Dorsolateral prefrontal cortex (tissue), 120 donors: ENCODE measurements at regions of chr7 and their contacts with region 1.

Region 1: DNA sequence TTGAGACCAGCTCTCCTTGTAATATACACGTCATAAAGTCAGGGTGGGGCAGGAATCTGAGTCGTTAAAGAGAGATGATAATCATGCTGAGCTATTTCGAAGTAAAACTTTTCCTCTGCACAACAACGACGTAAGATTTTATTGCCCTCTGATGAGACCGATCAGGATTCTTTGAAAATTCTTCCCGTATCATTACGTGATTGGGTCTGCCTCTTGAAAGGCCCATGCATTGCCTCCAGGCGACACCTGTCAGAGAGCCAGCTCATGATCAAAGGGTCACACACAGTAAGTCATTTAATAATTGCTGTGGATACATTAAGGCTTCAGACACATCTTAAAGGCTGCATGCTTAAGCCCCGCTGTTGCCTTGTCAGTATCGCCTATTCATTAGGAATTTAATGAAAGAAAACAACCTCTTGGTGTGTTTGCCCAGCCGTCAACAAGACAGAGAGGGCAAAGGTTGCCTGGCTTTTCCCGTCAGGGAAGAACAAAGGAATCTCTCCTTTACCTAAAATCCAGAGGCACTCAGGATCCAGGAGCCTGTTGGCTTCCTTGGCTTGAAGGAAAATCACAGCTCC is 189.0 kb upstream of the SH2B2 start:
- DNase-seq: peak in 3 of 10 donors; percentile 8 to 10 (median 10)
- H3K4me3 ChIP-seq: no peak overlapping the region
- H3K27ac ChIP-seq: no peak overlapping the region
- H3K27me3 ChIP-seq: no peaks in the 10 kb centered on the region
- CTCF ChIP-seq: no peak

Region 2: GRCh38 chr7:101823096-101823495 is 274.6 kb before region 1 on chr7:
- intact Hi-C with region 1: loop called in 1 of 2 experiments (anchors 10 kb)
- DNase-seq: no peak
- H3K4me3 ChIP-seq: peak overlapping the region in 2 of 59 donors; percentile 7 to 13
- H3K27ac ChIP-seq: peak overlapping the region in 1 of 59 donors; percentile 29
- H3K27me3 ChIP-seq: no peaks in the 10 kb centered on the region
- CTCF ChIP-seq: no peak

Region 3: GRCh38 chr7:102050864-102051460 is 46.7 kb before region 1 on chr7:
- intact Hi-C with region 1: no loop called
- DNase-seq: peak in 1 of 10 donors; percentile 36
- H3K4me3 ChIP-seq: no peak overlapping the region
- H3K27ac ChIP-seq: no peak overlapping the region
- H3K27me3 ChIP-seq: no peaks in the 10 kb centered on the region
- CTCF ChIP-seq: no peak

Region 4: GRCh38 chr7:102152672-102153585 is 55.3 kb after region 1 on chr7:
- intact Hi-C with region 1: no loop called
- DNase-seq: no peak
- H3K4me3 ChIP-seq: no peak overlapping the region
- H3K27ac ChIP-seq: no peak overlapping the region
- H3K27me3 ChIP-seq: no peaks in the 10 kb centered on the region
- CTCF ChIP-seq: no peak

Region 5: GRCh38 chr7:102306875-102307677 is 209.4 kb after region 1 on chr7:
- intact Hi-C with region 1: no loop called
- DNase-seq: peak in 4 of 10 donors; percentile 26 to 53 (median 40)
- H3K4me3 ChIP-seq: peak overlapping the region in 4 of 59 donors; percentile 3 to 27 (median 16)
- H3K27ac ChIP-seq: no peak overlapping the region
- H3K27me3 ChIP-seq: no peaks in the 10 kb centered on the region
- CTCF ChIP-seq: no peak